Psoas muscle (tissue), 8 donors: ENCODE measurements at regions of chr10 and their contacts with region 1.

Region 1: GRCh38 chr10:15370856-15371701 is at the start of gene FAM171A1:
- DNase-seq: peak; percentile 53 to 64
- ATAC-seq: peak; percentile 66 to 89 (median 84)
- H3K4me3 ChIP-seq: peak within 1 kb of the TSS; percentile 77
- H3K27ac ChIP-seq: peak within 1 kb of the TSS; percentile 4
- H3K4me1 ChIP-seq: no peaks in the 10 kb centered on the region
- H3K27me3 ChIP-seq: peaks cover 0 to 2% (median 0%) of the 10 kb centered on the region in 3 donors
- CTCF ChIP-seq: peak; percentile 32
- total RNA-seq, gene FAM171A1: 3.9 to 10.5 (median 5.9) TPM

Region 2: GRCh38 chr10:15209827-15210509 is 161.1 kb before region 1 on chr10:
- intact Hi-C with region 1: loop called in 1 of 2 experiments (anchors 1 kb)
- DNase-seq: peak; percentile 67 to 75
- ATAC-seq: peak; percentile 69 to 80 (median 73)
- H3K4me3 ChIP-seq: no peak overlapping the region
- H3K27ac ChIP-seq: no peak overlapping the region
- H3K4me1 ChIP-seq: no peaks in the 10 kb centered on the region
- H3K27me3 ChIP-seq: no peaks in the 10 kb centered on the region
- CTCF ChIP-seq: peak; percentile 84

Region 3: DNA sequence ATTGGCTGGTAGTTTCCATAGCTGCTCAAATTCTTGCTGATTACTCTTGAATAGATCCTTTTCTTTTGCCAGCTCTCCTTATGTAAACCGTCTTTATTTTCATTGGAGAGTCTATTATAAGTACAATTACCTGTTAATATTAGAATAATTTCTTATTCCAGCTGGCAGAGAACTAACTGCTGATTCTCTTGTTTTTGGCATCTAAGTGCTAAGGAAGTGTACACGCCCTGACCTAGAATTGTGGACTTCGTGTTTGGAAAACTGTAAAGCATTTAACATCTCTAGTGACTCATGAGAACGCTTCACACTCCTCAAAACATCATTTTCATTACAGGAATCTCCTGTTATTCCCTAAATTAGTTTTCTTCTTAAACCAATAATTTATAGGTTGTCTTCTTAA is 39.9 kb after region 1 on chr10:
- intact Hi-C with region 1: no loop called
- DNase-seq: no peak
- ATAC-seq: no peak
- H3K4me3 ChIP-seq: no peak overlapping the region
- H3K27ac ChIP-seq: no peak overlapping the region
- H3K4me1 ChIP-seq: no peaks in the 10 kb centered on the region
- H3K27me3 ChIP-seq: no peaks in the 10 kb centered on the region
- CTCF ChIP-seq: no peak

Region 4: GRCh38 chr10:15440204-15440711 is 69.2 kb after region 1 on chr10:
- intact Hi-C with region 1: no loop called
- DNase-seq: no peak
- ATAC-seq: no peak
- H3K4me3 ChIP-seq: no peak overlapping the region
- H3K27ac ChIP-seq: no peak overlapping the region
- H3K4me1 ChIP-seq: no peaks in the 10 kb centered on the region
- H3K27me3 ChIP-seq: peaks cover 0 to 7% (median 0%) of the 10 kb centered on the region in 3 donors
- CTCF ChIP-seq: no peak